Activated T-helper 2 cell treated with anti-CD3 and anti-CD28 coated beads, Interferon-gamma antibody, Interleukin-2, Interleukin-4, amounts not matched to agents 10 μg/mL and 5 μg/mL and 100 μg/mL, durations not matched to agents 14 hours and 24 hours and 36 hours (primary cell): ENCODE measurements at regions of chr18 and their contacts with region 1.

Region 1: GRCh38 chr18:13003466-13003896 is 12.3 kb downstream of the CEP192 start:
- DNase-seq: no peak
- H3K4me3 Mint-ChIP-seq: no peak overlapping the region
- H3K27ac Mint-ChIP-seq: no peak overlapping the region
- H3K4me1 Mint-ChIP-seq: peaks cover 30% of the 10 kb centered on the region
- H3K27me3 Mint-ChIP-seq: no peaks in the 10 kb centered on the region

Region 2: DNA sequence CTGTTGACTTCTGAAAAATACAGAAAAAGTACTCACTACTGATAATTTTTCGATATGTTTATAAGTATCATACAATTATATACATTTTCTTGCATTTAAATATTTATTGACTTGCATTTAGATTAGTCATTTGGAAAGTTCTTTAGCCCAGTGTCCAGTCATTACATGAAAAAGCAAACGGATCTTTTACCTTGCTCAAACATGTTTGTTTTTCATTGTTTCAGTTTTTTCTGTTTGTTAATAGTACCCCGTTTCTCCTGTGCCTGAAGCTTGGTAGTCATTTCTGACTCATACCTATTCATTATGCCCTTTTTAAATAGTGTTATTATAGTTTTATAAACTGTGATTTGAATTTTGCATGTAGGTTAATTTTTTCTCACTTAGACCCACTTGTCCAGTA is 15.8 kb after region 1 on chr18:
- intact Hi-C with region 1: loop called (anchors 2 kb)
- DNase-seq: no peak
- H3K4me3 Mint-ChIP-seq: no peak overlapping the region
- H3K27ac Mint-ChIP-seq: no peak overlapping the region
- H3K4me1 Mint-ChIP-seq: peaks cover 28% of the 10 kb centered on the region
- H3K27me3 Mint-ChIP-seq: no peaks in the 10 kb centered on the region

Region 3: DNA sequence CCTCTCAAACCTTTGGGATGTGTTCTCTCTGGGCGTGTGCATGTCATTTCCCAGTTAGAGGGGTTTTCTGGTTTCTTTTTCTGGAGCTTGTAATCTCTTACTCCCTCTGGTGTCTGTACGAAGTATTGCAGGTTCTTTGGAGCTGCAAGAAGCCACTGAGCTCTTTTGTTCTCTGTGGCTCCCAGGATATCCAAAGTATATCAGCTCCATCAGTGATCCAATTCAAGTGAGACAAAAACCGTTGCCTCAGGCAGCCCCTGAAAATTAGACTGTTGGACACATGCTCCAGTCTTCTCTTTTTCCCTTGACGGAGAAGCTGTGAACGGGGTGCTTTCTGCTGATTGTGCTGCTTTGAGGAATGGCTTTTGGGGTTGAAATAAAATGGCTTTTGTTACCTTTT is 156.1 kb after region 1 on chr18:
- intact Hi-C with region 1: loop called (anchors 10 kb)
- DNase-seq: no peak
- H3K4me3 Mint-ChIP-seq: no peak overlapping the region
- H3K27ac Mint-ChIP-seq: no peak overlapping the region
- H3K4me1 Mint-ChIP-seq: no peaks in the 10 kb centered on the region
- H3K27me3 Mint-ChIP-seq: peaks cover 15% of the 10 kb centered on the region

Region 4: DNA sequence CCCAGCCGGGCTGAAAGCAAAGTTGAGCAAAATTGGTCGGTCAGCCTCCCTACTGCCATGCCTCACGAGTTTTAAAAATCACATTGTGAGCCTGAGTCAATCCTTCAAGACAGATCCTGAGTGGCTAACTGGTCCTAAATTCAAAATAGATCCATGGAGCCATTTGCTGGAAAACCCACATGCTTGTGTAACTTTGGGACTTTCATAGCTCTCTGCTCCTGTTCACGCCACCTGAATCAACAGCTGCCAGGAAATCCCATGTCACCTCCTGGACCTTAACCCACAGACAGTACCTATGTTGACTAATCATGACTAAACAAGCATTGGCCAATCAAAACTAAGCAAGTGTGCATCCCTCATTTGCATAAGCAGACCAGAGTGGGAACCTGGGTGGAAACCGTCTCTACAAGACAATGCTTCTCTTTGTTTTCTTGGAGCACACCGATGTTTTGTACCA is 172.3 kb after region 1 on chr18:
- intact Hi-C with region 1: loop called (anchors 5 kb)
- DNase-seq: no peak
- H3K4me3 Mint-ChIP-seq: no peak overlapping the region
- H3K27ac Mint-ChIP-seq: no peak overlapping the region
- H3K4me1 Mint-ChIP-seq: peaks cover 32% of the 10 kb centered on the region
- H3K27me3 Mint-ChIP-seq: peaks cover 8% of the 10 kb centered on the region